ENCODE measurements at regions of chr19 and their contacts with region 1.

Region 1: DNA sequence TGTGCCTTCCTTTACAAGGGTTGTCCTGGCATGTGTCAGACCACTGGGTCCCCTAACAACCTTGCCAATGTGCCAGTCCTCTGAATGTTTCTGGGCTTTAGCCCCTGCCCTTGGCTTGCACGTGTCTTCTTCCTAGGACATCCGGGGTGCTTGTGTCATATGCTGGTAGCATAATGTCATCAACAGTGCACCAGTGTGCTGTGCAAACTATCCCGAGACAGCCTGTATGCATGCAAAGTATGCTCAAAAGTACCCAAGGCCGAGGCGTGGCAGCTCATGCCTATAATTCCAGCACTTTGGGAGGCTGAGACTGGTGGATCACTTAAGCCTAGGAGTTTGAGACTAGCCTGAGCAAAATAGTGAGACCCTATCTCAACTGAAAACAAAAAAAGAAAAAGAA is 20.7 kb upstream of the C19orf12 start:
- DNase-seq: no peak
- ATAC-seq: no peak
- H3K4me3 ChIP-seq: no peak overlapping the region
- H3K4me3 Mint-ChIP-seq: no peak overlapping the region
- H3K27ac ChIP-seq: no peak overlapping the region
- H3K27ac Mint-ChIP-seq: no peak overlapping the region
- H3K4me1 ChIP-seq: no peaks in the 10 kb centered on the region
- H3K4me1 Mint-ChIP-seq: no peaks in the 10 kb centered on the region
- H3K27me3 ChIP-seq: no peaks in the 10 kb centered on the region
- H3K27me3 Mint-ChIP-seq: peaks cover 0 to 16% (median 0%) of the 10 kb centered on the region in 5 donors

Region 2: DNA sequence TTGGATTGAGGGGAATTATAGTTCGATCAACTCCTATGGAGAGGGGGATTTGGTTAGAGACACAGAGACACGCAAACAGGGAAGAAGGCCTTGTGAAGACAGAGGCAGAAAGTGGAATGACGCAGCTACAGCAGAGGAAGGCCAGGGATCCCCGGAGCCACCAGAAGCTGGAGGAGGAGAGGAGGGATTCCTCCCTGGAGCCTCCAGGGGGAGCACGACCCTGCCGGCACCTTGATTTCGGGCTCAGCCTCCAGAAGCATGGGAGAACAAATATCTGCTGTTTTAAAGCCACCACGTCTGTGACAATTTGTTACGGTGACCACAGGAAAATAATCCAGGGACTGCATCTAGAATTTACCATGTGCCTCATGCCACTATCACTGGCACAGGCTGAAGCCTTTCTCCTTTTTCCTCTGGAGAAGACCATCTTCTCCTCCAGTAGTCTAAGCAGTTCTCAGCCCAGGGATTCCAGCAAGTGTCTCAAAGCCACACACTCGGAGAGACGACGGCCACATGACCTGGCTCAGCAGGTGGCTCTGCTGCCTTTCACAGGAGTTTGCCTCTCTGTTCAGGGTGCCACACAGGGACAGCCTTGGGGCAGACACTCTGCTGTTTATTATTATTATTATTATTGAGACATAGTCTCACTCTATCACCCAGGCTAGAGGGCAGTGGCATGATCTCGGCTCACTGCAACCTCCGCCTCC is 36.1 kb after region 1 on chr19:
- CTCF ChIA-PET with region 1: no interaction called
- POLR2A ChIA-PET with region 1: interaction called, 3 read pairs
- intact Hi-C with region 1: loop called in 1 of 2 experiments (anchors 1 kb)
- DNase-seq: peak in 5 of 9 donors; percentile 16 to 31 (median 21)
- ATAC-seq: no peak
- H3K4me3 ChIP-seq: no peak overlapping the region
- H3K4me3 Mint-ChIP-seq: no peak overlapping the region
- H3K27ac ChIP-seq: no peak overlapping the region
- H3K27ac Mint-ChIP-seq: no peak overlapping the region
- H3K4me1 ChIP-seq: no peaks in the 10 kb centered on the region
- H3K4me1 Mint-ChIP-seq: peaks cover 0 to 8% (median 0%) of the 10 kb centered on the region in 7 donors
- H3K27me3 ChIP-seq: no peaks in the 10 kb centered on the region
- H3K27me3 Mint-ChIP-seq: no peaks in the 10 kb centered on the region